ENCODE measurements at regions of chr1 and their contacts with region 1.

Region 1: DNA sequence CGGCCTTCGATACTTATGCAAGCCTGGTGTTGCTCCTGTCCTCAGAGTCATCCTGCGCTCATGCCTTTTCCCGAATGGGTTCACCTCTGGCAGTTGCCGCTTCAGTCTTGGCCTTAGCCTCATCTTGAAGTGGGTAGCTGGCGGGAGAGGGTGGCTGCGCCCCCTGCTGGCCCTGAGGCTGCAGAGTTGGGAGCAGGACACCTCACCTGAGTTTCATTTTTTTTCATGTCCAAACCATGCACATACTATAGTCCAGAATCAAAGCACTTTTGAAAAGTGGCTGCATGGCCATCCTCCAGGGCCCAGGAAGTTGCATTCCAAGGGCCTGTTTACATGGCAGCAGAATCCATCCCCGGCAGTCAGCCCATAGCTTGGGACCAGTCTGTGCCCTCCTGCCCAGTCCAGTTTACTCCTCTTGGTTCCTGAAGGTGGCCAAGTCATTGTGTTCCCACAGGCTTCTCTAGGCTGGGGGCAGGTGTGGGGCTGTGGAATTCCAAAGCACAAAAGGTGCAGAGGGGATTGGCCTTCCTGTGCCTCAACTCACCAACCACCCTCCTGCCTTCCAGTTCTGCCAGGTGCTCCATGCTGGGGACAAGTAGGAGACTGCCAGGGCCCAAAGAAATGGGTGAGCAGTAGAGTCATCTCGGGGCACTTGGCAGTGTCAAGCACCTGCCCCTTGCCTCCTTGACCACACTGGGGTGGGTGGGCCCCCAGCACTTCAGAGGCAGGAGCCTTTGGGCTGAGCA is 44.0 kb downstream of the YARS1 start:
- DNase-seq: peak; percentile 86
- H3K4me3 Mint-ChIP-seq: no peak overlapping the region
- H3K27ac Mint-ChIP-seq: no peak overlapping the region
- H3K4me1 Mint-ChIP-seq: peaks cover 10% of the 10 kb centered on the region
- H3K27me3 Mint-ChIP-seq: no peaks in the 10 kb centered on the region

Region 2: GRCh38 chr1:32521165-32521564 is 252.0 kb before region 1 on chr1:
- CTCF ChIA-PET with region 1: interaction called, 29 read pairs
- intact Hi-C with region 1: loop called (anchors 1 kb)
- DNase-seq: no peak
- H3K4me3 Mint-ChIP-seq: peak overlapping the region; percentile 66
- H3K27ac Mint-ChIP-seq: no peak overlapping the region
- H3K4me1 Mint-ChIP-seq: peaks cover 3% of the 10 kb centered on the region
- H3K27me3 Mint-ChIP-seq: no peaks in the 10 kb centered on the region

Region 3: DNA sequence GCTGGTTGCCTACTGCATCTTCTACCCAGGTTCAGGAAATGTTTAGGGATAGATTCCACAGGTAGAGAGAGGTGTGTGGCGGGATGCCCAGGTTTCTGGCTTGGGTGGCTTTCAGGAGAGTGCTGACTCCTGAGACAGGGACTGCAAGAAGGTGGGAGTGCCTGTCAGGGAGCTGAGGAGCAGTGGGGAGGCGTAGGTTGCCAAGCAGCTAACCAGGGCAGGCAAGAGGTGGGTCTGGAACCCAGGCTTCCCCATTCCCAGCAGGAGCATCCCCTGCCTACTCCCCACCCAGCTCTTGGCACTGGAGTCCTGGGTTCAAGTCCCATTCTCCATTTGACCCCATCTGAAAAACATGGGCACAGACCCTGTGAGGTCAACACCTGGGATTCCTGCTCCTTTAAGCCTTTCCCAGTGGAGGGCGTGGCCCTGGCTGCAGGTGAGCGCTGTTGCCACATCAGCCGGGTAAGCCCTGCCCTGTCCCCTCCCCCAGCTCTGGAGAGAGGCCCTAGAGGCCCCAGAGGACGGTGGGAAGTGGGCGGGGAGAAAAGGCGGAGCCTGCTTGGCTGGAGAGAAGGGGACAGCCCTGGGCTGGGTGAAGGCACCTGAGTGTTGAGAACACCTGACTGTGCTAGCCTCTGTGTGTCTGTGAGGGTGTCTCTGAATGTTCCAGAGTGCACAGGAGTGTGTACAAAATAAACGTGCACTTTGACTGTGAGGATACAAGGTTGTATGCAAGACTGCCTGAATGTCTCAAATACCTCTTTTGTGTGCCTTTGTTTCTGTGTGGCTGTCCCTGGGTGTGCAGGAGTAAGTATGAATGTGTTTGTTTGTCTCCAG is 56.7 kb before region 1 on chr1:
- CTCF ChIA-PET with region 1: interaction called, 126 read pairs
- intact Hi-C with region 1: loop called (anchors 1 kb)
- DNase-seq: peak; percentile 92
- H3K4me3 Mint-ChIP-seq: no peak overlapping the region
- H3K27ac Mint-ChIP-seq: no peak overlapping the region
- H3K4me1 Mint-ChIP-seq: peaks cover 9% of the 10 kb centered on the region
- H3K27me3 Mint-ChIP-seq: peaks cover 2% of the 10 kb centered on the region

Region 4: GRCh38 chr1:32761253-32761880 is 11.8 kb before region 1 on chr1:
- CTCF ChIA-PET with region 1: interaction called, 15 read pairs
- intact Hi-C with region 1: no loop called
- DNase-seq: peak; percentile 73
- H3K4me3 Mint-ChIP-seq: no peak overlapping the region
- H3K27ac Mint-ChIP-seq: peak overlapping the region; percentile 53
- H3K4me1 Mint-ChIP-seq: peaks cover 26% of the 10 kb centered on the region
- H3K27me3 Mint-ChIP-seq: no peaks in the 10 kb centered on the region

Region 5: GRCh38 chr1:33633019-33633801 is 860.0 kb after region 1 on chr1:
- CTCF ChIA-PET with region 1: no interaction called
- intact Hi-C with region 1: no loop called
- DNase-seq: peak; percentile 96
- H3K4me3 Mint-ChIP-seq: no peak overlapping the region
- H3K27ac Mint-ChIP-seq: no peak overlapping the region
- H3K4me1 Mint-ChIP-seq: no peaks in the 10 kb centered on the region
- H3K27me3 Mint-ChIP-seq: peaks cover 37% of the 10 kb centered on the region

Measured in activated naive CD4-positive, alpha-beta T cell treated with anti-CD3 and anti-CD28 coated beads for 36 hours (primary cell).